ENCODE measurements at regions of chr3 and their contacts with region 1.

Region 1: GRCh38 chr3:141105828-141106628 is 54.9 kb downstream of the SPSB4 start:
- DNase-seq: peak in 1 of 2 experiments; percentile 70
- H3K4me3 ChIP-seq: no peak overlapping the region
- H3K27ac ChIP-seq: no peak overlapping the region
- H3K4me1 ChIP-seq: peaks cover 0 to 5% (median 4%) of the 10 kb centered on the region in 4 experiments; a peak in 5 of 7 replicates
- H3K27me3 ChIP-seq: no peaks in the 10 kb centered on the region
- CTCF ChIP-seq: peak in 2 of 3 experiments; percentile 76 to 83; a peak in 3 of 4 replicates
- EP300 ChIP-seq: no peak
- POLR2A ChIP-seq: no peak
- RAD21 ChIP-seq: peak; percentile 73 to 82

Region 2: DNA sequence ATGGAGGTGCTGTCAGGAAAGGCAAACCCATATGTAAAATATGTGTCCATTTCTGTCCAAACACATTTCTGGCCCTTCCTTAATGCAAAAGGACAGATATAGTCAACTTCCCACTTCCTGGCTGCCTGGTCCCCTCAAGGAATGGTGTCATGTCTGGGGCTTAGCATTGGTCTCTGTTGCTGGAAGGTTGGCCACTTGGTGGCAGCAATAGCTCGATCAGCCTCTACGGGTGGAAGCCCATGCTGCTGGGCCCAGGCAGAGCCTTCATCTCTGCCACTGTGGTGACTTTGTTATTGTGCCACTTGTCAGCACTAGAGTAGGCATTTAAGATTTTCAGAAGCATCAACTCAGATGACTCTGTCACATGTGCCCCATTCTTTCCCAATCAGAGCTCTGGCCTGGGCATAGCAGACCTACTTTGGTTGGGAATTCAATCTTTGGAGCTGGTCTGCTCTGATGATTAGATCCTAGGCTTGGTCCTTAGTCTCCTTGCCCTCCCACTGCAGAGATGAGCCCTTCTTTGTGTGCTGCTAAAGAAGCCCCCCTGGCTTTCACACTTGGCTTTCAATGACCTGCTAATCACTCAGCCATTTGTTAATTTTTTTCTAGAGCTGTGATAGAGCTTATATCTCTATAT is 105.9 kb before region 1 on chr3:
- CTCF ChIA-PET with region 1: interaction called, 48 read pairs
- POLR2A ChIA-PET with region 1: no interaction called
- DNase-seq: peak; percentile 34 to 76
- H3K4me3 ChIP-seq: no peak overlapping the region
- H3K27ac ChIP-seq: no peak overlapping the region
- H3K4me1 ChIP-seq: no peaks in the 10 kb centered on the region
- H3K27me3 ChIP-seq: no peaks in the 10 kb centered on the region
- CTCF ChIP-seq: peak; percentile 87 to 97 (median 95)
- EP300 ChIP-seq: no peak
- POLR2A ChIP-seq: no peak
- RAD21 ChIP-seq: peak; percentile 99

Region 3: DNA sequence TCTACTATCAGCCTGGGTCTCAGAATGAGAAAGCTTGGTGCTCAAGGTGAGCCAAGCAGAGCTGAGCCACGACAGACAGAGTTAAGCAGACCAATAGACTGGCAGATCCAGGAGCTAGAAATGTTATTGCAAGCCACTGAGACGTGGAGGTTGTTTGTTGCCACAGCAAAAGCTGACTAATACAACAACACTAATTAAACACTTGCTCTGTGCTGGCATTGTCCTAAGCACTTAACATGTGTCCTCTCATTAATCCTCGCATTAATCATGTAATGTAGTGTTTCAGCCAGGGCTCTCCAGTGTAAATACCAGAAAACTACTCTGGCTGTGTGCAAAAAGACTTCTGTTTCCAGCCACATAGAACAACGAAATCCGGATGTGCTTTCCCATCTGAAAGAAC is 66.4 kb before region 1 on chr3:
- CTCF ChIA-PET with region 1: interaction called, 10 read pairs
- POLR2A ChIA-PET with region 1: no interaction called
- DNase-seq: no peak
- H3K4me3 ChIP-seq: no peak overlapping the region
- H3K27ac ChIP-seq: no peak overlapping the region
- H3K4me1 ChIP-seq: no peaks in the 10 kb centered on the region; a peak in 1 of 7 replicates
- H3K27me3 ChIP-seq: no peaks in the 10 kb centered on the region
- CTCF ChIP-seq: no peak
- EP300 ChIP-seq: no peak
- POLR2A ChIP-seq: no peak
- RAD21 ChIP-seq: no peak

Region 4: GRCh38 chr3:141094790-141095545 is 11.1 kb before region 1 on chr3:
- CTCF ChIA-PET with region 1: interaction called, 238 read pairs
- POLR2A ChIA-PET with region 1: no interaction called
- DNase-seq: no peak
- H3K4me3 ChIP-seq: no peak overlapping the region
- H3K27ac ChIP-seq: no peak overlapping the region
- H3K4me1 ChIP-seq: peaks cover 4 to 22% (median 9%) of the 10 kb centered on the region in 4 experiments
- H3K27me3 ChIP-seq: no peaks in the 10 kb centered on the region
- CTCF ChIP-seq: no peak
- EP300 ChIP-seq: no peak
- POLR2A ChIP-seq: no peak
- RAD21 ChIP-seq: no peak

Region 5: DNA sequence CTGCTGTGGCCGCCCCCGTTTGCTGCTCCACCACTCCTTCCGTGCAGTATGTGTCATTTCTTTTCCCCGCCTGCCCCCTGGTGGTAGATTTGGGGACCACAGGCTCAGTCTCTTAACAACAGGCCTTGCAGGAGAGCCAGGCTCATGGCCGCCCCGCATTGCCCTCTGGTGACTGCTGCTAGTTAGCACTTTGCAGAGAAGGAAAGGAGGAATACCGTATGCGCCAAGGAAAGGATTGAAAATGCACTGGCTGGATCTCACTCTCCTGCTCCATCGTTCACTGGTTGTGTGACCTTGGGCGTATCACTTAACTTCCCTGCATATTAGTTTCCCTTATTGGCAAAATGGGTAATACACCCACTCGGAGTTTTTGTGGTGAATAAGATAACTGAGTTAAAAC is 86.3 kb after region 1 on chr3:
- CTCF ChIA-PET with region 1: interaction called, 19 read pairs
- POLR2A ChIA-PET with region 1: no interaction called
- DNase-seq: peak; percentile 88 to 100
- H3K4me3 ChIP-seq: no peak overlapping the region
- H3K27ac ChIP-seq: no peak overlapping the region
- H3K4me1 ChIP-seq: no peaks in the 10 kb centered on the region
- H3K27me3 ChIP-seq: no peaks in the 10 kb centered on the region
- CTCF ChIP-seq: peak; percentile 89 to 99 (median 99)
- EP300 ChIP-seq: no peak
- POLR2A ChIP-seq: no peak
- RAD21 ChIP-seq: peak; percentile 100

Measured in H1 (cell line).